B cell (primary cell): ENCODE measurements at regions of chr11 and their contacts with region 1.

Region 1: GRCh38 chr11:67648140-67649123 is 2.1 kb downstream of the ACY3 start:
- DNase-seq: peak; percentile 85
- ATAC-seq: peak; percentile 79
- H3K4me3 ChIP-seq: peak overlapping the region in 2 of 5 experiments; percentile 4 to 11
- H3K4me3 Mint-ChIP-seq: peak overlapping the region; percentile 95
- H3K27ac ChIP-seq: peak overlapping the region; percentile 56 to 66
- H3K27ac Mint-ChIP-seq: peak overlapping the region; percentile 78
- H3K4me1 ChIP-seq: peaks cover 66 to 72% of the 10 kb centered on the region in 2 donors
- H3K4me1 Mint-ChIP-seq: peaks cover 66% of the 10 kb centered on the region
- H3K27me3 ChIP-seq: peaks cover 0 to 5% (median 0%) of the 10 kb centered on the region in 4 experiments
- H3K27me3 Mint-ChIP-seq: no peaks in the 10 kb centered on the region
- CTCF ChIP-seq: peak; percentile 72

Region 2: GRCh38 chr11:67265633-67266423 is 382.6 kb before region 1 on chr11:
- CTCF ChIA-PET with region 1: no interaction called
- POLR2A ChIA-PET with region 1: no interaction called
- intact Hi-C with region 1: no loop called
- DNase-seq: peak; percentile 89
- ATAC-seq: peak; percentile 69
- H3K4me3 ChIP-seq: no peak overlapping the region
- H3K4me3 Mint-ChIP-seq: peak overlapping the region; percentile 81
- H3K27ac ChIP-seq: peak overlapping the region; percentile 55 to 63
- H3K27ac Mint-ChIP-seq: peak overlapping the region; percentile 89
- H3K4me1 ChIP-seq: peaks cover 63 to 65% of the 10 kb centered on the region in 2 donors
- H3K4me1 Mint-ChIP-seq: peaks cover 66% of the 10 kb centered on the region
- H3K27me3 ChIP-seq: peaks cover 0 to 9% (median 2%) of the 10 kb centered on the region in 4 experiments
- H3K27me3 Mint-ChIP-seq: peaks cover 6% of the 10 kb centered on the region
- CTCF ChIP-seq: peak; percentile 69

Region 3: GRCh38 chr11:67613960-67614715 is 34.3 kb before region 1 on chr11:
- CTCF ChIA-PET with region 1: interaction called, 5 read pairs
- POLR2A ChIA-PET with region 1: interaction called, 7 read pairs
- intact Hi-C with region 1: loop called (anchors 5 kb)
- DNase-seq: peak; percentile 97
- ATAC-seq: peak; percentile 95
- H3K4me3 ChIP-seq: peak overlapping the region in 4 of 5 experiments; percentile 38 to 58 (median 50)
- H3K4me3 Mint-ChIP-seq: peak overlapping the region; percentile 83
- H3K27ac ChIP-seq: peak overlapping the region; percentile 97 to 98
- H3K27ac Mint-ChIP-seq: peak overlapping the region; percentile 99
- H3K4me1 ChIP-seq: peaks cover 32 to 38% of the 10 kb centered on the region in 2 donors
- H3K4me1 Mint-ChIP-seq: peaks cover 45% of the 10 kb centered on the region
- H3K27me3 ChIP-seq: no peaks in the 10 kb centered on the region
- H3K27me3 Mint-ChIP-seq: no peaks in the 10 kb centered on the region
- CTCF ChIP-seq: peak; percentile 40

Region 4: GRCh38 chr11:67691149-67691548 is 42.7 kb after region 1 on chr11:
- CTCF ChIA-PET with region 1: interaction called, 11 read pairs
- POLR2A ChIA-PET with region 1: no interaction called
- intact Hi-C with region 1: no loop called
- DNase-seq: no peak
- ATAC-seq: peak; percentile 28
- H3K4me3 ChIP-seq: no peak overlapping the region
- H3K4me3 Mint-ChIP-seq: no peak overlapping the region
- H3K27ac ChIP-seq: no peak overlapping the region
- H3K27ac Mint-ChIP-seq: no peak overlapping the region
- H3K4me1 ChIP-seq: no peaks in the 10 kb centered on the region
- H3K4me1 Mint-ChIP-seq: no peaks in the 10 kb centered on the region
- H3K27me3 ChIP-seq: peaks cover 0 to 4% (median 2%) of the 10 kb centered on the region in 4 experiments
- H3K27me3 Mint-ChIP-seq: peaks cover 30% of the 10 kb centered on the region
- CTCF ChIP-seq: no peak

Region 5: DNA sequence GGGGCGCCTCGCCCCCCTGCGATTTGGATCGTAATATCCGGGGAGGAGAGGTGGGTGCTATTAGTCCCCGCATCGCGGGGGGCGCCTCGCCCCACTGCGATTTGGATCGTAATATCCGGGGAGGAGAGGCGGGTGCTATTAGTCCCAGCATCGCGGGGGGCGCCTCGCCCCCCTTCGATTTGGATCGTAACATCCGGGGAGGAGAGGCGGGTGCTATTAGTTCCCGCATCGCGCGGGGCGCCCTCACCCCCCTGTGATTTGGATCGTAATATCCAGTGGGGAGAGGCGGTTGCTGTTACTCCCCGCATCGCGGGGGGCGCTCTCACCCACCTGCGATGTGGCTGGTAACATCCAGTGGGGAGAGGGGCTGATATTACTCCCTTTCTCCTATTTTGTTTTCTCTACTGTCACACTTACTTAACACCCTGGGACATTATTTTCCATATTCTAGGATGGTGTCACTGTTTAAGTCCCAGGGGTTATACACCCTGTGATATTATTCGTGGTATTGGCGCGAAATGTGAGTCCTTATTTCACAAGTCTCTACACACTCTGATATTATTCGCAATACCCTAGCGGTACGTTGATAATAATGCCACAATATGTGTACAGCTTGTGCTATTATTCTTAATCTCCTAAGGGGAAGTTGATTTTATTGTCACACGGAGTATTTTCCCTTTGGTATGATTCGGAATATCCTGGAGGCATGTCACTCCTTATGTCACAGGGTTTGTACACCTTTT is 83.8 kb after region 1 on chr11:
- CTCF ChIA-PET with region 1: no interaction called
- POLR2A ChIA-PET with region 1: no interaction called
- intact Hi-C with region 1: no loop called
- DNase-seq: peak; percentile 87
- ATAC-seq: peak; percentile 33
- H3K4me3 ChIP-seq: peak overlapping the region in 3 of 5 experiments; percentile 31 to 41 (median 35)
- H3K4me3 Mint-ChIP-seq: peak overlapping the region; percentile 42
- H3K27ac ChIP-seq: no peak overlapping the region
- H3K27ac Mint-ChIP-seq: no peak overlapping the region
- H3K4me1 ChIP-seq: peaks cover 11 to 12% of the 10 kb centered on the region in 2 donors
- H3K4me1 Mint-ChIP-seq: peaks cover 10% of the 10 kb centered on the region
- H3K27me3 ChIP-seq: peaks cover 0 to 14% (median 5%) of the 10 kb centered on the region in 4 experiments
- H3K27me3 Mint-ChIP-seq: peaks cover 36% of the 10 kb centered on the region
- CTCF ChIP-seq: peak; percentile 64